ENCODE measurements at regions of chr6 and their contacts with region 1.

Region 1: DNA sequence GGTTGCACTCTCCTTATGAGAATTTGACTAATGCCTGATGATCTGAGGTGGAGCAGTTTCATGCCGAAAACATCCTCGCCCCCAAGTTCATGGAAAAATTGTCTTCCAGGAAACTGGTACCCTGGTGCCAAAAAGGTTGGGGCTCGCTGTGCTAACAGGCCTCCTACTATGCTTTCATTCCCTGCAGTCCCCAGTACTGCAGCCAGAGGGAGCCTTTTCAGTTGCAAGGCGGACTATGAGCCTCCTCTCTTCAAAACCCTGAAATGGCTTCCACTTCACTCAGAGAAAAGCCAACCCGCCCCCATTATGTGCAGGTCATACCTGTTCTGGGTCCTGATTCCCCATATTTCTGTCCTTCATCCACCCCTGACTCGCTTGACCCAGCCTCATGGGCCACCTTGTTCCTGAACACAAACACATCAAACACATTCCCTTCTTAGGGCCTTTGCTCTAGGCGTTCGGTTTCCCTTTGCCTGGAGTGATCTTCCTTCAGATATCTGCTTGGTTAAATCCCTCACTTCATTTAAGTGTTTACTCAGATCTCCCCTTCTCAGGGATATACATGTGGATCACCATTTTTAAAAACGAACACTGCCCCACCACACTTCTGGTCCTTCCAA is 173.7 kb downstream of the PHACTR1 start:
- DNase-seq: no peak
- CTCF ChIP-seq: peak; percentile 20

Region 2: GRCh38 chr6:12637960-12638641 is 252.2 kb before region 1 on chr6:
- in situ Hi-C with region 1: loop called (anchors 25 kb)
- DNase-seq: peak; percentile 25
- CTCF ChIP-seq: peak; percentile 69

Measured in GM13976 (cell line).